Sciatic nerve (tissue), 2 donors: ENCODE measurements at regions of chr20 and their contacts with region 1.

Region 1: DNA sequence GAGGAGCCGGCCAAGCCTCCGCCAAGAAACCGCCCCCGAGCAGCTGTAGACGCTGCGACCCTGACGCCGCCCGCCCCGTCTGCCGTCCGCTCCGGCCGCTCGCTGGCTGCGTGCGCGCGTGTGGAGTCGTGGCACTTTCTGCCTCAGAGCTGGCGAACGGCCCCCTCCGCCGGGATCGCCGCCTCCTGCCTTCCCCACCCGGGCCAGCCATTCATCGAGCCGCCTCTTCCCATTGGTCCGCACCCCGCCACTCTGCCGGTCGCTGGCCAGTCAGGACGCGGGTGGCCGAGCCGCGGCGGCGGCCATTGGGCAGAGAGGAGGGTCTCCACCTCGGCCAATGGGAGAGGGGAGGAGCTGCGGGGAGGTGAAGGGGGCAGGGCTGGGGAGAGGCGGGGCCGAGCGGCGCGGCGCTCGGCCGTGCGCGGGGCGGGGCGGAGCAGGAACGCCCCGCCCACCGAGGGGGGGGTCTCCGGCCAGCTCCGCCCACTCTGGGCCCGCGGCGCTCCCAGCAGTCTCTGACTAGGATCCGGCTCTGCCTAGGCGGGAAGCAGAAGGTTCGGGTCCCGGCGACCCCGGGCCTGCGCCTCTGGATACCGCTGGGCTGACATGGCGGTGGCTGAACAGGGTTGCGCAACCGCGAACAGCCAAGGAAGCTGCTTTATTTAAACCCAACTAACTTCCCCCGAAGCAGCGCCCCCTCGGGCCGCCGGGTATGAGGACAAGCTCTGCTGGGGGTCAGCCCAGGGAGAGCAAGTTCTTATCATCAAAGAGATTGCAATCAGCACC is at the start of gene RRBP1:
- DNase-seq: peak; percentile 98
- ATAC-seq: peak; percentile 98
- total RNA-seq, gene RRBP1: 163 TPM

Region 2: DNA sequence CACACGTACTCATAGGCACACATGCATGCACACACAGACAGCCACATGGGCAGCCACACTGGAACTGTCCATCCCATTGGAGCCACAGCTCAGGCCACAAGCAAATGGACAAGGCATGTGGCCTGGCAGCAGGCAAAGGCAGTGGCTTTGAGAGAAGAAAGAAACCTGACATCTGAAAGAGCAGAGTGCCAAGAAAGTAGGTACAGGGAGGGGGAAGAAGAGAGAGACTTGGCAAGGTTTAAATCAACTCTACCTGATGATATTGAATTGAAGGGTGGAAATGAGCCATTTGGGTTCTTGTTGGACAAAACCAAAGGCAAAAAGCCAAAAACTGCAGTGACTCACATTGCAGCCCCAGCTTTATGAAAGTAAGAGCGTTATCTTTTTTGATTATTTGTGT is 312.8 kb before region 1 on chr20:
- intact Hi-C with region 1: no loop called
- DNase-seq: no peak
- ATAC-seq: no peak

Region 3: DNA sequence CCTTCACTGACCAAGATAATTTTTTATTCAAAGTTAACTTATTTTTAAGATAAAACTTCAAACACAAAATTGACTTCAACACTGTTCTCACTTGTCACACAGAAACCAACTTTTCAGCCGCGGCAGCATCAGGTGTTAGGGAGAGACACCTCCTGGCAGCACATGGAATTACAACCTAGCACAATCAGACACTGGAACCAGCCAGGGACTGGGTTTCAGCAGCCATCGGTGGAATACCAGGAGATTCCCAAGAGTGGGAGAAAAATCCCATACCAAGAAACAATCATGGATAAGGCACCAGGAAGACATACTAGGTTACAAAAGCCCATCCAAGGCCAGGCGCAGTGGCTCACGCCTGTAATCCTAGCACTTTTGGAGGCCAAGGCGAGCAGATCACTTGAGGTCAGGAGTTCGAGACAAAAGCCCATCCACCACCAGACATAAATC is 216.3 kb after region 1 on chr20:
- intact Hi-C with region 1: loop called (anchors 10 kb)
- DNase-seq: peak; percentile 87
- ATAC-seq: peak; percentile 71